ENCODE measurements at regions of chr11 and their contacts with region 1.

Region 1: DNA sequence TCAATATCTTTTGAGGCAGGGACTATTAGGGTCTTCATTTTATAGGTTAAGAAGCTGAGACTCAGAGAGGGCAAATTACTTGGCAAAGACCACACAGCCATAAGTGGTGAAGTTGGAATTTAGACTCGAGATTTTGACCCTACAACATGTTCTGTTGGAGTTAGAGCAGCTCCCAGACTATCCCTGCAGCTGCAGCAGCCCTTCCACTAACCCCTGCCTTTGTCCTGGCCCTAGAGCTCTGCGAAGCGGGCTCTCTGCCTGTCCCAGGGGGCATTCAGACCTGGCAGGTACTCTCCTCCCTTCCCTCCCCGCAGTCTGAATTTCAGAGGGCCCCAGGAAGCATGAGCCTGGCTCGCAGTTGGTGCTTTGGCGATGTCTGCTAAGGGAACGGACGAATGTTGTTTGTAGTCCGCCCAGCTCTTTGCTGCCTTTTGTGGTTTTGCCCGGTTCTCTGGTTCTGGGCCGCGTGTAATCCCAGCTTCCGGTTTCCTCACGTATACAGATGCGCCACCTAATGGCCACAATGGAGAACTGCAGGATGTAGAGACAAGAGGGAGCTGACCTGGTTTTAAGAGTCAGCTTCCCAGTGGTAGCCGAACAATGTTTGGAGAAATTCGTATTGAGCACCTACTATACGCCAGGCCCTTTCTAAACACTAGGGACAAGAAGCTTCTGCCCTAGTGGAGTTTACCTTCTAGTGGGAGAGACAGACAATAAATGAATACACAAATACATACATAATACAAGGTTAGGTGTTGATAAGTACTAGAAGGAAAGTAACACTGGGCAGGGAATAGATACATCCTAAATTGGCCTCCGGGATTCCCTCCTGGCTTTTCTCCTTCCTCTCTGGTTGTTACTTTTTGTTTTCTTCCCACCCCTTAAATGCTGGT is 125.2 kb downstream of the ST3GAL4 start:
- DNase-seq: peak; percentile 59 to 67 (median 65)
- H3K4me3 ChIP-seq: peak overlapping the region in 1 of 2 donors; percentile 41
- H3K4me3 Mint-ChIP-seq: peak overlapping the region; percentile 18 to 78 (median 71)
- H3K27ac ChIP-seq: no peak overlapping the region
- H3K27ac Mint-ChIP-seq: peak overlapping the region in 3 of 7 donors; percentile 0 to 80 (median 76)
- H3K4me1 ChIP-seq: peaks cover 3% of the 10 kb centered on the region
- H3K4me1 Mint-ChIP-seq: peaks cover 13 to 21% (median 16%) of the 10 kb centered on the region in 4 donors
- H3K27me3 ChIP-seq: no peaks in the 10 kb centered on the region
- H3K27me3 Mint-ChIP-seq: no peaks in the 10 kb centered on the region

Region 2: GRCh38 chr11:126284829-126285228 is 195.8 kb before region 1 on chr11:
- CTCF ChIA-PET with region 1: no interaction called
- POLR2A ChIA-PET with region 1: no interaction called
- intact Hi-C with region 1: no loop called
- DNase-seq: peak; percentile 78 to 94 (median 81)
- H3K4me3 ChIP-seq: no peak overlapping the region
- H3K4me3 Mint-ChIP-seq: peak overlapping the region; percentile 83 to 97 (median 88)
- H3K27ac ChIP-seq: no peak overlapping the region
- H3K27ac Mint-ChIP-seq: peak overlapping the region; percentile 85 to 94 (median 91)
- H3K4me1 ChIP-seq: peaks cover 43% of the 10 kb centered on the region
- H3K4me1 Mint-ChIP-seq: peaks cover 29 to 55% (median 46%) of the 10 kb centered on the region in 4 donors
- H3K27me3 ChIP-seq: no peaks in the 10 kb centered on the region
- H3K27me3 Mint-ChIP-seq: no peaks in the 10 kb centered on the region

Region 3: GRCh38 chr11:126310228-126310991 is 170.2 kb before region 1 on chr11:
- CTCF ChIA-PET with region 1: interaction called, 73 read pairs
- POLR2A ChIA-PET with region 1: interaction called, 3 read pairs
- intact Hi-C with region 1: no loop called
- DNase-seq: peak; percentile 31 to 47 (median 39)
- H3K4me3 ChIP-seq: no peak overlapping the region
- H3K4me3 Mint-ChIP-seq: no peak overlapping the region
- H3K27ac ChIP-seq: no peak overlapping the region
- H3K27ac Mint-ChIP-seq: peak overlapping the region in 2 of 7 donors; percentile 58 to 65
- H3K4me1 ChIP-seq: peaks cover 15% of the 10 kb centered on the region
- H3K4me1 Mint-ChIP-seq: peaks cover 25 to 47% (median 33%) of the 10 kb centered on the region in 4 donors
- H3K27me3 ChIP-seq: no peaks in the 10 kb centered on the region
- H3K27me3 Mint-ChIP-seq: no peaks in the 10 kb centered on the region

Region 4: GRCh38 chr11:126440792-126441514 is 39.7 kb before region 1 on chr11:
- CTCF ChIA-PET with region 1: interaction called, 263 read pairs
- POLR2A ChIA-PET with region 1: interaction called, 8 read pairs
- intact Hi-C with region 1: loop called (anchors 1 kb)
- DNase-seq: peak; percentile 56 to 74 (median 61)
- H3K4me3 ChIP-seq: no peak overlapping the region
- H3K4me3 Mint-ChIP-seq: no peak overlapping the region
- H3K27ac ChIP-seq: no peak overlapping the region
- H3K27ac Mint-ChIP-seq: no peak overlapping the region
- H3K4me1 ChIP-seq: peaks cover 3% of the 10 kb centered on the region
- H3K4me1 Mint-ChIP-seq: peaks cover 0 to 5% (median under 1%) of the 10 kb centered on the region in 4 donors
- H3K27me3 ChIP-seq: no peaks in the 10 kb centered on the region
- H3K27me3 Mint-ChIP-seq: peaks cover 3 to 8% of the 10 kb centered on the region in 2 donors

Region 5: GRCh38 chr11:126452241-126453101 is 28.2 kb before region 1 on chr11:
- CTCF ChIA-PET with region 1: interaction called, 263 read pairs
- POLR2A ChIA-PET with region 1: no interaction called
- intact Hi-C with region 1: no loop called
- DNase-seq: no peak
- H3K4me3 ChIP-seq: no peak overlapping the region
- H3K4me3 Mint-ChIP-seq: no peak overlapping the region
- H3K27ac ChIP-seq: no peak overlapping the region
- H3K27ac Mint-ChIP-seq: no peak overlapping the region
- H3K4me1 ChIP-seq: no peaks in the 10 kb centered on the region
- H3K4me1 Mint-ChIP-seq: peaks cover 0 to 5% (median 3%) of the 10 kb centered on the region in 4 donors
- H3K27me3 ChIP-seq: no peaks in the 10 kb centered on the region
- H3K27me3 Mint-ChIP-seq: no peaks in the 10 kb centered on the region

Region 6: DNA sequence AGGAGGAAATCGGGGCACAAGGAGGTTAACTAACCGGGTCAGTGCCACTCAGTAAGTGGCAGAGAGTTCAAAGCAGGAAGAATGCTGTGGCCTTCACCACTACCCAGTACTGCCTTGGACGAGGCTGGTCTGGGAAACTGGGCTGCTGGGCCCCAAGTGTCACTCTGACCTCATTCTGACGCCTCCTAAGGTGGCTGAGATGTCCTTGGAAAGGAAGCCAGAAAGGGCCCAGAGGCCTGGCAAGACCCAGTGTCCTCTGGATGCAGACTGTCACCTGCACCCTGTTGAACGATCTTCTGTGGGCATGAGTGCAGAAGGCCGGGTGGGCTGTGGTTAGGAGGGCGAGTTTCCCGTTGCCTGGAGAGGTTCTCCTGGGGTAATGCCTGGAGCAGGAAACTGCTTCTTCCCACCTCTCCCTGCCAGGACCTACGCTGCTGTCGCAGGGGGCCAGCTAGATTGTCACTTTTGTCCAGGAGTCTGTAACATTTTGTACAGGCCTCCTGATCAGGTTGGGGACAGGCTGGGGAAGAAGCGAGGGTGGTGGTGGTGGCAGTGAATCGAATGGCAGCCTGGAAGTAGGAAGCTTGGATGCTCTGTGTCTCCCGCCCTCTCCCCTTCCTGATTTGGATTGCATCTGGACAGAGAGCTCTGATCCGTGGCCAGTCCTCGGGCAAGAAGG is 20.1 kb before region 1 on chr11:
- CTCF ChIA-PET with region 1: interaction called, 70 read pairs
- POLR2A ChIA-PET with region 1: interaction called, 3 read pairs
- intact Hi-C with region 1: no loop called
- DNase-seq: no peak
- H3K4me3 ChIP-seq: no peak overlapping the region
- H3K4me3 Mint-ChIP-seq: no peak overlapping the region
- H3K27ac ChIP-seq: no peak overlapping the region
- H3K27ac Mint-ChIP-seq: no peak overlapping the region
- H3K4me1 ChIP-seq: peaks cover 3% of the 10 kb centered on the region
- H3K4me1 Mint-ChIP-seq: peaks cover 3 to 12% (median 6%) of the 10 kb centered on the region in 4 donors
- H3K27me3 ChIP-seq: no peaks in the 10 kb centered on the region
- H3K27me3 Mint-ChIP-seq: peaks cover 0 to 4% of the 10 kb centered on the region in 2 donors

Region 7: GRCh38 chr11:126465573-126466188 is 15.0 kb before region 1 on chr11:
- CTCF ChIA-PET with region 1: interaction called, 70 read pairs
- POLR2A ChIA-PET with region 1: interaction called, 3 read pairs
- intact Hi-C with region 1: no loop called
- DNase-seq: peak in 1 of 5 donors; percentile 6
- H3K4me3 ChIP-seq: no peak overlapping the region
- H3K4me3 Mint-ChIP-seq: peak overlapping the region in 6 of 8 donors; percentile 27 to 74 (median 46)
- H3K27ac ChIP-seq: no peak overlapping the region
- H3K27ac Mint-ChIP-seq: peak overlapping the region in 5 of 7 donors; percentile 30 to 75 (median 53)
- H3K4me1 ChIP-seq: peaks cover 6% of the 10 kb centered on the region
- H3K4me1 Mint-ChIP-seq: peaks cover 11 to 25% (median 15%) of the 10 kb centered on the region in 4 donors
- H3K27me3 ChIP-seq: no peaks in the 10 kb centered on the region
- H3K27me3 Mint-ChIP-seq: peaks cover 0 to 4% of the 10 kb centered on the region in 2 donors

Region 8: DNA sequence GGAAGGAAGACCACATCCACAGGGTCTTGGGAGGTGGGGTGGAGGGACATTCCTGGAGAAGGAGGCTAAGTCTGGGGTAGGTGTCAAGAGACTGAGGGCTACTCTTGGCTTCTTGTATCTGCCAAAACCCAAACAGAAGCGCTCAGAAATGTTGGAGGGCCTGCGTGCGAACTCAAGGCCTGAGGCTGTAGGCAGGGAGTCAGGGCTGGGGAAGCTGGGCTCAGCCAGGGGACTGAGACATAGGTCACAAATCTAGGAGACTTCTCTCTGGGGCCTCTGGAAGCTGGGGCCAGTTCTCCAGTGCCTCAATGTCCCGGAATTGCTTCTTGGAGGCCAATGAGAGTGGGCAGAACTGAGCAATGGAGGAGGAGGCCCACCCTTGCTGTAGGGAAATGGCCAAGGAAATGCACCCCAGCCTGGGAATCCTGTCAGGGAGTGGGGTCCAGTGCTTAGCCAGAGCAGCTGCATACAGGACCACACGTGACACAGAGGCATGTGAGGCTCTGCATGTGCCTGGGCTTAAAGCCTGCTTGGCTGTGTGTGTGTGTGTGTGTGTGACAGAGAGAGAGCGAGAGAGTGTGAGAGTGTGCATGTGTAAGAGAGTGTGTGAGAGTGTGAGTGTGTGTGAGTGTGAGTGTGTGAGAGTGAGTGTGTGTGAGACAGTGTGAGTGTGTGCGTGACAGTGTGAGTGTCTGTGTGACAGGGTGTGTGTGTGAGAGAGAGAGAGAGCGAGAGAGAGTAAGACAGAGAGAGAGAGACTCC is 16.1 kb after region 1 on chr11:
- CTCF ChIA-PET with region 1: interaction called, 20 read pairs
- POLR2A ChIA-PET with region 1: no interaction called
- intact Hi-C with region 1: no loop called
- DNase-seq: no peak
- H3K4me3 ChIP-seq: no peak overlapping the region
- H3K4me3 Mint-ChIP-seq: no peak overlapping the region
- H3K27ac ChIP-seq: no peak overlapping the region
- H3K27ac Mint-ChIP-seq: no peak overlapping the region
- H3K4me1 ChIP-seq: no peaks in the 10 kb centered on the region
- H3K4me1 Mint-ChIP-seq: peaks cover 0 to 5% (median 0%) of the 10 kb centered on the region in 4 donors
- H3K27me3 ChIP-seq: no peaks in the 10 kb centered on the region
- H3K27me3 Mint-ChIP-seq: peaks cover 12 to 16% of the 10 kb centered on the region in 2 donors

Region 9: GRCh38 chr11:127042445-127042844 is 561.8 kb after region 1 on chr11:
- CTCF ChIA-PET with region 1: no interaction called
- POLR2A ChIA-PET with region 1: no interaction called
- intact Hi-C with region 1: no loop called
- DNase-seq: no peak
- H3K4me3 ChIP-seq: no peak overlapping the region
- H3K4me3 Mint-ChIP-seq: no peak overlapping the region
- H3K27ac ChIP-seq: no peak overlapping the region
- H3K27ac Mint-ChIP-seq: no peak overlapping the region
- H3K4me1 ChIP-seq: no peaks in the 10 kb centered on the region
- H3K4me1 Mint-ChIP-seq: no peaks in the 10 kb centered on the region
- H3K27me3 ChIP-seq: no peaks in the 10 kb centered on the region
- H3K27me3 Mint-ChIP-seq: peaks cover 5 to 7% of the 10 kb centered on the region in 2 donors